A673 (cell line): ENCODE measurements at regions of chr10 and their contacts with region 1.

Region 1: GRCh38 chr10:124315591-124316270 is 103.0 kb downstream of the OAT start:
- DNase-seq: no peak
- H3K4me3 ChIP-seq: no peak overlapping the region
- H3K27ac ChIP-seq: no peak overlapping the region
- H3K4me1 ChIP-seq: no peaks in the 10 kb centered on the region
- H3K27me3 ChIP-seq: peaks cover 23% of the 10 kb centered on the region
- CTCF ChIP-seq: no peak

Region 2: GRCh38 chr10:124414076-124414475 is 98.3 kb after region 1 on chr10:
- CTCF ChIA-PET with region 1: no interaction called
- POLR2A ChIA-PET with region 1: no interaction called
- intact Hi-C with region 1: no loop called
- DNase-seq: no peak
- H3K4me3 ChIP-seq: no peak overlapping the region
- H3K27ac ChIP-seq: no peak overlapping the region
- H3K4me1 ChIP-seq: no peaks in the 10 kb centered on the region
- H3K27me3 ChIP-seq: no peaks in the 10 kb centered on the region
- CTCF ChIP-seq: no peak

Region 3: DNA sequence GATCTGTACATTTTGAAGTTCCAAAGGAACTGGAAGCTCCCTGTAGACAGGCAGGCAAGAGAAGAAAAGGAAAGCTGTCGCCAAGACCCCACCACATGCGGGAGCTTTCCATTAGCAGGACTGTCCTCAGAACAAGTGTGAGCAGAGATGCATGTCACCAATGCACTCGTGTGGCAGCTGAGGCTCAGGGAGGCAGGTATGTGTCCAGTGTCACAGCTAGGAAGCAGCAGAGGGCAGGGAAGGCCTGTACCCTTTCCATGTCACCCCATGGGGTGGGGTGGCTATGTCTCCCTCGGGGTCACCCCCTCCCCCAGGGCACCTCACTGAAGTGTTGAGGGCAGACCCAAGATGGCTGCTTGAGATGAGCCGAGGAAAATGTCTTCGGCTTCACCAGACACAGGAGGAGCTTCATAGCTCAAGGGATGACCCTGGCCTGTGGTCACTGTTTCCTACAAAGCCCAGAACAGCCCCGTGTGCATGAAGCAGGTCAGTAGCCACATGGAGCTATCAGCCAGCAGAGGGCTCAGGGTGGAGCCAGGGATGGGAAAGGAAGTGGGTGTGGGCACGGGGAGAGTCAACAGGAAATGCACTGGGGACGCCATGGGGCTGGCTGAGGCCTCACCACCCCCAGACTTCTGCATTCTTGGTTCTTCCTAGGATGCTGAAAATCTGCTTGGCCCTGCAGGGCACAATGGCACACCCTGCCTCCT is 331.8 kb after region 1 on chr10:
- CTCF ChIA-PET with region 1: no interaction called
- POLR2A ChIA-PET with region 1: interaction called, 11 read pairs
- intact Hi-C with region 1: no loop called
- DNase-seq: peak; percentile 61
- H3K4me3 ChIP-seq: no peak overlapping the region
- H3K27ac ChIP-seq: peak overlapping the region; percentile 25
- H3K4me1 ChIP-seq: peaks cover 17% of the 10 kb centered on the region
- H3K27me3 ChIP-seq: no peaks in the 10 kb centered on the region
- CTCF ChIP-seq: peak; percentile 36; the same call in 1 of the 2 replicates